PC-3 (cell line): ENCODE measurements at regions of chr3 and their contacts with region 1.

Region 1: DNA sequence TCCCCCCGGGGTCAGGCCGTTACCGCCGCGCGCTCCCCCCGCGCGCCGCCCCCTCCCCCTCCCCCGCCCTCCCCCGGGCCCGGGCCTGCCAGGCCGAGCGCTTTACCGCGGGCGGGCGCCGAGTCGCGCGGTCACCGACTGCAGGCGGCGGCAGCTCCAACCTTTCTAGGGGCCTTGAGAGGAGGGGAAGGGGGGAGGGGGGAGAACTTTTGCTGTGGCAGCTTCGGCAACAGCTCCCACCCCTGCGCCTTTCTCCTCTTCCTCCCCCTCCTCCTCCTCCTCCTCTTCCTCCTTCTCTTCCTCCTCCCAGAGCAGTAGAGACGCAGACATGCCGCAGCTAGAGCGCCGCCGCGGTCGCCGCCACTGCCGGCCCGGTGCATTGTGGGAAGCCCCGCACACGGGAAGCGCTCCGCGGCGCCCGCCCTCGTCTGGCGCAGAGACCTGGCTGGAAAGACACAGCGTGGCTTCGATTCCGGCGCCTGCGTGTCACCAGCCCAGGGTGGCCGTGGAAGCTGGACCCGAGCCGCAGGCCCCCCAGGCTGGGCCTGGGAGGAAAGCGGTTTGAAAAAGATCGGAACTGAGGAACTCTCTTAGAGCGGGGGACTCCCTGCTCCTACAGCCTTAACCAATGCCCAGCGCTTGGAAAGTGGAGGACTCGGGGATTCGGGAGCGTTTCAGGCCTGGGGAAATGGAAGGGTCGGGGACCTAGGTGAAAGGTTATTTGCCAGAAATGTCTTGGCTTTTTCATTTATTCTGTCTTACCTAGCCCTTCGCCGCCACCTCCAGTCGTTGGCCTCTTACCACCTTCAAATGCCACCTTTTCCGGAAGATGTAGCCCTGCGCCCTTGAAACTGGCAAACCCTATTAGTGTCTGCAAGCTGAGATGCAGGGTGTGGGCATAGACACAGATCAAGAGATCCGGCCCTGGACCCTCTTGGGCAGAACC is at the start of gene ZNF148:
- DNase-seq: peak; percentile 85
- ATAC-seq: peak; percentile 75
- H3K4me3 ChIP-seq: peak within 1 kb of the TSS; percentile 89
- H3K27ac ChIP-seq: peak within 1 kb of the TSS; percentile 86
- H3K4me1 ChIP-seq: peaks cover 17% of the 10 kb centered on the region
- H3K27me3 ChIP-seq: no peaks in the 10 kb centered on the region
- CTCF ChIP-seq: no peak
- total RNA-seq, gene ZNF148: 18.1 and 23.3 TPM in 2 replicates

Region 2: GRCh38 chr3:125431912-125432790 is 56.9 kb after region 1 on chr3:
- CTCF ChIA-PET with region 1: no interaction called
- POLR2A ChIA-PET with region 1: no interaction called
- intact Hi-C with region 1: loop called (anchors 2 kb)
- DNase-seq: peak; percentile 38
- ATAC-seq: peak; percentile 56
- H3K4me3 ChIP-seq: no peak overlapping the region
- H3K27ac ChIP-seq: peak overlapping the region; percentile 14; the same call in 1 of the 2 replicates
- H3K4me1 ChIP-seq: peaks cover 26% of the 10 kb centered on the region
- H3K27me3 ChIP-seq: no peaks in the 10 kb centered on the region
- CTCF ChIP-seq: no peak